Aorta (tissue), 5 donors: ENCODE measurements at regions of chrX and their contacts with region 1.

Region 1: GRCh38 chrX:9341291-9342201 is 123.3 kb upstream of the TBL1X start:
- DNase-seq: peak; percentile 88 to 93
- ATAC-seq: peak; percentile 42
- H3K4me3 ChIP-seq: peak overlapping the region in 1 of 2 donors; percentile 64
- H3K27ac ChIP-seq: peak overlapping the region; percentile 74 to 83
- H3K4me1 ChIP-seq: no peaks in the 10 kb centered on the region
- H3K27me3 ChIP-seq: no peaks in the 10 kb centered on the region

Region 2: GRCh38 chrX:8743126-8743732 is 598.3 kb before region 1 on chrX:
- intact Hi-C with region 1: no loop called
- DNase-seq: peak; percentile 66 to 82
- ATAC-seq: no peak
- H3K4me3 ChIP-seq: no peak overlapping the region
- H3K27ac ChIP-seq: no peak overlapping the region
- H3K4me1 ChIP-seq: no peaks in the 10 kb centered on the region
- H3K27me3 ChIP-seq: peaks cover 0 to 6% of the 10 kb centered on the region in 2 donors

Region 3: GRCh38 chrX:8913655-8914409 is 427.7 kb before region 1 on chrX:
- intact Hi-C with region 1: loop called in 1 of 2 experiments (anchors 5 kb)
- DNase-seq: peak in 1 of 2 donors; percentile 48
- ATAC-seq: peak; percentile 89
- H3K4me3 ChIP-seq: peak overlapping the region in 1 of 2 donors; percentile 4
- H3K27ac ChIP-seq: peak overlapping the region in 1 of 2 donors; percentile 81
- H3K4me1 ChIP-seq: no peaks in the 10 kb centered on the region
- H3K27me3 ChIP-seq: no peaks in the 10 kb centered on the region

Region 4: GRCh38 chrX:9440116-9440844 is 98.7 kb after region 1 on chrX:
- intact Hi-C with region 1: loop called in 1 of 2 experiments (anchors 5 kb)
- DNase-seq: no peak
- ATAC-seq: peak; percentile 51
- H3K4me3 ChIP-seq: no peak overlapping the region
- H3K27ac ChIP-seq: peak overlapping the region; percentile 44 to 93
- H3K4me1 ChIP-seq: no peaks in the 10 kb centered on the region
- H3K27me3 ChIP-seq: no peaks in the 10 kb centered on the region

Region 5: GRCh38 chrX:9525511-9526248 is 184.1 kb after region 1 on chrX:
- intact Hi-C with region 1: loop called (anchors 10 kb)
- DNase-seq: no peak
- ATAC-seq: no peak
- H3K4me3 ChIP-seq: no peak overlapping the region
- H3K27ac ChIP-seq: no peak overlapping the region
- H3K4me1 ChIP-seq: peaks cover 0 to 1% of the 10 kb centered on the region in 2 donors
- H3K27me3 ChIP-seq: no peaks in the 10 kb centered on the region

Region 6: DNA sequence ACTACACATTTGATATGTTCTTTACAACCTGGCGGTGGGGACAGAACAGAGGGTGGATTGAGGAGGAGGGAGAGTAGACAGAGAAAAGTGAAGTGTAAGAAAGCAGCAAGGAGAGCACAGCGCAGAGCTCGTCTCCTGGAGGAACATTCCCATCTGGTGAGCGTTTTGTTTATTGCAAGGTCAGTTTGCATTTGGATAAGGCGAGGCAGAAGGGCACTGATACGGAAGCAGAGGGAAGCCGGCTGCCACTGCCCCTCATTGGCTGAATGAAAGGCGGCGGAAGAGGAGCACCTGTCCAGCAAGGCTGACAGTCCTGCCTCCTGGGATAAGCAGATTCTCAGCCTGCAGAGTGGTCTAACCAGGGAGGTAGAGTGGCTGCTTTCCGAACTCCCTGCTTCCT is 340.9 kb after region 1 on chrX:
- intact Hi-C with region 1: loop called in 1 of 2 experiments (anchors 5 kb)
- DNase-seq: no peak
- ATAC-seq: no peak
- H3K4me3 ChIP-seq: no peak overlapping the region
- H3K27ac ChIP-seq: no peak overlapping the region
- H3K4me1 ChIP-seq: no peaks in the 10 kb centered on the region
- H3K27me3 ChIP-seq: no peaks in the 10 kb centered on the region